Activated CD8-positive, alpha-beta memory T cell treated with anti-CD3 and anti-CD28 coated beads, Interleukin-2, amount 10 ng/mL, durations not matched to agents 7 days and 5 days (primary cell): ENCODE measurements at regions of chr2 and their contacts with region 1.

Region 1: DNA sequence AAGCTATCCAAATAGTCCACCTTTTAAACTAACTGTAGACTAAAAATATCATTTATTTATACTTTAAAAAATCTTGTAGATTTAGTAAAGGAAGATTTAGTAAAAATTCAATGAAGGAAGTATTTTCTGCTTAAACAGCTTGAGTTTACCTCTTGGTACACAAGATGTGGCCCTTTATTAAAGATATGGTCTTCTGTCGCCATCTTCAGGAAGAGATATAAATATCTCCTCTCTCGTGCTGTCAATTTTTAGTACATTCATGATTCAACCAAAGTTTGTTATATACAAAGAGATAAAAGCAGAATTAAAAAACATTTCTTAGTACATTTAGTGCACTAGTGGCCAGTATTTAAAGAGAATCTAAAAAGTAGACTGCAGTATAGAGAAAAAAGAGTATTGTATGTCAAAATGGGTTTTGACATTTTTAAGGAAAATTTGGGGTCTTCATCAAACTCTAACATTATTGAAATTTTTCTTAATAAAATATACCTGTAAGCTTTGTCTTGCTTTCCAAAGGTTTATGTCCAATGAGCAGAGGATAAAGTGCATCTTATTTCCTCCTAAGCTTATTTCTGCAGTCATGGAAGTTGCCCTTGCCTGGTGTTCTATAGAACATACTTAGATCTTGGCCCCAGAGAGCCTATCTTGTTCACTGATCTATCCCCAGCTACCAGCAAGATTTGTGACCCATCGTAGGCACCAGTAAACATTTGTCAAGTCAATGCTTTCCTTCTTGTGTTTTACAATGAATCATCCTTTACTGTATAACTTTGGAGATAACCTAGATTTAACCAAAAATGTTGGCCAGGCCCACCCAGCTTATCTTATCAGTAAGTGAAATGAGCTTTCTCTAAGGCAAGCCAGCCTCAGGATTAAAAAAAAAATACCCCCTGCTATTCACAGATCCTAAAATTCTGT is 18.5 kb upstream of the EML6 start:
- DNase-seq: no peak
- ATAC-seq: no peak
- H3K4me3 Mint-ChIP-seq: no peak overlapping the region
- H3K27ac Mint-ChIP-seq: no peak overlapping the region
- H3K4me1 Mint-ChIP-seq: peaks cover 10% of the 10 kb centered on the region
- H3K27me3 Mint-ChIP-seq: peaks cover 56% of the 10 kb centered on the region

Region 2: DNA sequence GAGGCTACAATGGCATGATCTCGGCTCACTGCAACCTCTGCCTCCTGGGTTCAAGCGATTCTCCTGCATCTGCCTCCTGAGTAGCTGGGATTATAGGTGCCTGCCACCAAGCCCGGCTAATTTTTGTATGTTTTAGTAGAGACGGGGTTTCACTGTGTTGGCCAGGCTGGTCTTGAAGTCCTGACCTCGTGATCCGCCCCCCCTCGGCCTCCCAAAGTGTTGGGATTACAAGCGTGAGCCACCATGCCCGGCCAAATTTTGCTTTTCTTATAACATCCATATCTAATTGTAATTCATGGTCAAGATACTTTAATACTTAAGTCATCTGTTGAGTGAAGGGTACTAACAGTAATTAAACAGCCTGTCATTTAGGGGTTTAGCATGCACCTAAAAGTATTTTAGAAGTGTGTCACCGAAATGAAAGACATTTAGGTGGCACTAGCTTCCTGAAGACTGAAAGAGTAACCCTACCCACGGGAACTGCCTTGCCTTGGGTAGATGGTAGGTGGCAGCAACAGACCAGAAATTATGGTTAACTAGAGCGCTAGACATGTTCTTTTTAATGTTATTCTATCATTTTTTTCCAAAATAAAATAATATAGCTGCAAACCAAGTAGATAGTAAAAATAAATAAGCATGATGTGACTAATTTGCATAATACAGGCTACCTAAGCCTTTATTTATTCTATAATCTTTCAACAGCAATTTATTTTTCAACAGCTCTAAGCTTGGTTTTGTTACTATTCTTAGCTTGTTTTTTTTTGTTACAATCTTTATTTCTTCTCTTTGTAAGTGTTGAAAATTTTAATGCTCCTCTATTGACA is 598.1 kb before region 1 on chr2:
- CTCF ChIA-PET with region 1: interaction called, 17 read pairs
- DNase-seq: peak; percentile 63
- ATAC-seq: peak; percentile 82
- H3K4me3 Mint-ChIP-seq: no peak overlapping the region
- H3K27ac Mint-ChIP-seq: no peak overlapping the region
- H3K4me1 Mint-ChIP-seq: peaks cover 11% of the 10 kb centered on the region
- H3K27me3 Mint-ChIP-seq: no peaks in the 10 kb centered on the region

Region 3: DNA sequence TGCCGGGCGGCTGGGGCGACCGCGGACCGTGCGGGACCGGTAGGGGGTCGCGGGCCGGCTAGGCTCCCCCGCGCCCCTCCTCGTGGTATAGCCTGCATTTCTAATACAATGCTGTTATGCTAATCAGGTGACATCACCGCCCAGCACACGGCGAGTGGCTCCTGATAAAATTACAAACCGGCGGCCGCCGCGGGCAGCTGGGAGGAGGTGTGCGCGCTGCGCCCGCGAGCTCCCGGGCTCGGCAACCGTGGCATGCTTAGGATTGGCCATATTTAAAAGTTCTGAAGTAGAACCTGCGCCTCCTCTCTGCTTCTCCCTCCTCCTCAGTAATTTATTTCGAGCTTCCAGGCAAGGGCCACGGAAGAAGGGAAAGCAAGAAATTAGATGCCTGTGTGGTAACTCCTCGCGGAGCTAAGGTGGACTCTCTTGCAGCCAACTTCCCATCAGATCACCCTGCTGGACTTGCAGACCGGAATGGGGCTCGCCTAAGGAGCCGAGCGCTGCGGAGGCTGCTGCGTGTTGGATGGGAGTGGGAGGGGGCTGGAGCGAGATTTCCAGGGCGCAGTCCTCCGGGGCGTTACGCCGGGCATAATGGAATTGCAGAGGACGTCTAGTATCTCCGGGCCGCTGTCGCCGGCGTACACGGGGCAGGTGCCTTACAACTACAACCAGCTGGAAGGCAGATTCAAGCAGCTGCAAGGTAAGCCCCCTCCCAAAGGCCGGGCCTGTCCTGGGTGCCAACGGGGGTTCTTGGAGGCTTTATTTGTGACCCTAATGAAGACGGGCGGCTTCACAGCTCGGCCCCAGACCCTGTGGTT is 146.6 kb before region 1 on chr2:
- CTCF ChIA-PET with region 1: interaction called, 12 read pairs
- DNase-seq: peak; percentile 81
- ATAC-seq: peak; percentile 74
- H3K4me3 Mint-ChIP-seq: peak overlapping the region; percentile 90
- H3K27ac Mint-ChIP-seq: peak overlapping the region; percentile 86
- H3K4me1 Mint-ChIP-seq: peaks cover 46% of the 10 kb centered on the region
- H3K27me3 Mint-ChIP-seq: no peaks in the 10 kb centered on the region

Region 4: GRCh38 chr2:54665436-54665856 is 39.5 kb before region 1 on chr2:
- CTCF ChIA-PET with region 1: interaction called, 87 read pairs
- DNase-seq: peak; percentile 61
- ATAC-seq: peak; percentile 49
- H3K4me3 Mint-ChIP-seq: no peak overlapping the region
- H3K27ac Mint-ChIP-seq: no peak overlapping the region
- H3K4me1 Mint-ChIP-seq: peaks cover 17% of the 10 kb centered on the region
- H3K27me3 Mint-ChIP-seq: no peaks in the 10 kb centered on the region

Region 5: GRCh38 chr2:54680397-54681041 is 24.4 kb before region 1 on chr2:
- CTCF ChIA-PET with region 1: interaction called, 23 read pairs
- DNase-seq: peak; percentile 74
- ATAC-seq: peak; percentile 91
- H3K4me3 Mint-ChIP-seq: peak overlapping the region; percentile 73
- H3K27ac Mint-ChIP-seq: peak overlapping the region; percentile 78
- H3K4me1 Mint-ChIP-seq: peaks cover 53% of the 10 kb centered on the region
- H3K27me3 Mint-ChIP-seq: peaks cover 64% of the 10 kb centered on the region

Region 6: DNA sequence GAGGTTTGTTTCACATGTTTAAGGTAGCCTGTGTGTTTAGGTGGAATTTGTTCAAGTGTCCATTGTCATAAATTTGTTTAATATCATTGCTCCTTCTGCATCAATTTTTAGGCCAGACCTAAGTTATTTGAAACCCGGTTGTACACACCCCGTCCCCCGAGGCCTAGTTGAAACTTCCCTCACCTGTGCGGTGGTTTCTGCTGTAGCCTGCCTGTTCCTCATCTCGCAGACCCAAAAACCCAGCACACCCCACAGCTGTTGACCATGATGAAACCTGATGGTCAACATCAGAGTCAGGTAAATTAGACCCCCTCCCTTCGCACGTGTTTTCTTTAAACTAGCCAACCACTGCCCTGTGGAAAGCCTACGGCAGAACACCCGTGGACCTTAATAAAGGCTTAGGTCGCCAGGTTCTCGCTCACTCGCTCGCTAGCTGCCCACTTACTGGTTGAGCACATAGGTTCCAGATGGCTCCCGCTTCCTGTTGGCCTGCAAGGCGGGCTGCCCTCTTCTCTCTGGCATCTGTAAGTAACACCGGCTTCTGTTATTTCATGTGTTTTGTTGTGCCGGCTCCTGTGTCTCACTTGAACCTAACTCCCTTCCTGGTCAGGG is 82.9 kb after region 1 on chr2:
- CTCF ChIA-PET with region 1: no interaction called
- DNase-seq: no peak
- ATAC-seq: no peak
- H3K4me3 Mint-ChIP-seq: no peak overlapping the region
- H3K27ac Mint-ChIP-seq: no peak overlapping the region
- H3K4me1 Mint-ChIP-seq: no peaks in the 10 kb centered on the region
- H3K27me3 Mint-ChIP-seq: no peaks in the 10 kb centered on the region

Region 7: GRCh38 chr2:54859997-54860686 is 155.2 kb after region 1 on chr2:
- CTCF ChIA-PET with region 1: no interaction called
- DNase-seq: no peak
- ATAC-seq: no peak
- H3K4me3 Mint-ChIP-seq: no peak overlapping the region
- H3K27ac Mint-ChIP-seq: no peak overlapping the region
- H3K4me1 Mint-ChIP-seq: no peaks in the 10 kb centered on the region
- H3K27me3 Mint-ChIP-seq: no peaks in the 10 kb centered on the region